CD8-positive, alpha-beta memory T cell (primary cell): ENCODE measurements at regions of chr5 and their contacts with region 1.

Region 1: GRCh38 chr5:181191529-181192394 is 13.2 kb downstream of the TRIM7 start:
- DNase-seq: peak; percentile 90 to 97 (median 95)
- H3K4me3 ChIP-seq: peak overlapping the region; percentile 100
- H3K4me3 Mint-ChIP-seq: peak overlapping the region; percentile 94 to 100 (median 97)
- H3K27ac ChIP-seq: peak overlapping the region; percentile 83
- H3K27ac Mint-ChIP-seq: peak overlapping the region; percentile 93 to 100 (median 97)
- H3K4me1 ChIP-seq: peaks cover 6% of the 10 kb centered on the region
- H3K4me1 Mint-ChIP-seq: peaks cover 27 to 47% (median 35%) of the 10 kb centered on the region in 3 donors
- H3K27me3 ChIP-seq: no peaks in the 10 kb centered on the region
- H3K27me3 Mint-ChIP-seq: peaks cover 0 to 36% of the 10 kb centered on the region in 2 donors

Region 2: GRCh38 chr5:181001947-181002346 is 189.8 kb before region 1 on chr5:
- CTCF ChIA-PET with region 1: no interaction called
- POLR2A ChIA-PET with region 1: no interaction called
- DNase-seq: no peak
- H3K4me3 ChIP-seq: no peak overlapping the region
- H3K4me3 Mint-ChIP-seq: no peak overlapping the region
- H3K27ac ChIP-seq: no peak overlapping the region
- H3K27ac Mint-ChIP-seq: no peak overlapping the region
- H3K4me1 ChIP-seq: no peaks in the 10 kb centered on the region
- H3K4me1 Mint-ChIP-seq: no peaks in the 10 kb centered on the region
- H3K27me3 ChIP-seq: peaks cover under 1% of the 10 kb centered on the region
- H3K27me3 Mint-ChIP-seq: peaks cover 14 to 42% of the 10 kb centered on the region in 2 donors

Region 3: DNA sequence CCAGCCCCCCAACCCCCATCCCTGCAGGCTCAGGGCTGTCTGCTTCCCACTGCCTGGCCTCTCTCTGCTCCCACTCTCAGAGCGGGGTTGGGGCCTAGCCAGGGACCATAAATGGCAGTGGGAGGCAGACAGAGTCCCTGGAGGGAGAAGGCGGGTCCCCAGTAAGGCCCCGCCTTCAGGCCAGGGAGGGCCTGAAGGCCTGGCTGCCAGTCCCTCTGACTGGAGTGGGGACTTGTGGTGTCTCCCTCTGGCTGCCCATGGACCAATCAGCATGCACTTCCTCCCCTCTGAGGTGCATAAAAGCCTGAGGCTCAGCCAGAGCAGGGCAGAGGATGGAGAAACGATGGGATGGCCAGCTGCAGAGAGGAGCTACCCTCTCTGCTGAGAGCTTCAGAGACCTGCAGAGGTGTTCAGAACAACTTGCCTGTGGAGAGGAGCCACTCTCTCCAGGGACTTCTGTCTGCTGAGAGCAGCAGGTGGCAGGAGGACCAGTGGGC is 154.3 kb before region 1 on chr5:
- CTCF ChIA-PET with region 1: no interaction called
- POLR2A ChIA-PET with region 1: no interaction called
- DNase-seq: no peak
- H3K4me3 ChIP-seq: no peak overlapping the region
- H3K4me3 Mint-ChIP-seq: no peak overlapping the region
- H3K27ac ChIP-seq: no peak overlapping the region
- H3K27ac Mint-ChIP-seq: no peak overlapping the region
- H3K4me1 ChIP-seq: no peaks in the 10 kb centered on the region
- H3K4me1 Mint-ChIP-seq: no peaks in the 10 kb centered on the region
- H3K27me3 ChIP-seq: no peaks in the 10 kb centered on the region
- H3K27me3 Mint-ChIP-seq: peaks cover 11 to 39% of the 10 kb centered on the region in 2 donors

Region 4: GRCh38 chr5:181217111-181217802 is 25.5 kb after region 1 on chr5:
- CTCF ChIA-PET with region 1: interaction called, 164 read pairs
- POLR2A ChIA-PET with region 1: interaction called, 101 read pairs
- DNase-seq: peak; percentile 61 to 76 (median 70)
- H3K4me3 ChIP-seq: peak overlapping the region; percentile 82
- H3K4me3 Mint-ChIP-seq: peak overlapping the region; percentile 87 to 96 (median 93)
- H3K27ac ChIP-seq: peak overlapping the region; percentile 26
- H3K27ac Mint-ChIP-seq: peak overlapping the region; percentile 92 to 100 (median 98)
- H3K4me1 ChIP-seq: peaks cover 38% of the 10 kb centered on the region
- H3K4me1 Mint-ChIP-seq: peaks cover 43 to 54% (median 45%) of the 10 kb centered on the region in 3 donors
- H3K27me3 ChIP-seq: no peaks in the 10 kb centered on the region
- H3K27me3 Mint-ChIP-seq: peaks cover 4 to 22% of the 10 kb centered on the region in 2 donors

Region 5: GRCh38 chr5:181243512-181244343 is 52.0 kb after region 1 on chr5 and contains the start of gene RACK1:
- CTCF ChIA-PET with region 1: interaction called, 7 read pairs
- POLR2A ChIA-PET with region 1: interaction called, 30 read pairs
- DNase-seq: peak; percentile 83 to 93 (median 87)
- H3K4me3 ChIP-seq: peak within 1 kb of the TSS; percentile 95
- H3K4me3 Mint-ChIP-seq: peak within 1 kb of the TSS; percentile 94 to 99 (median 97)
- H3K27ac ChIP-seq: peak within 1 kb of the TSS; percentile 96
- H3K27ac Mint-ChIP-seq: peak within 1 kb of the TSS; percentile 96 to 99 (median 98)
- H3K4me1 ChIP-seq: peaks cover 64% of the 10 kb centered on the region
- H3K4me1 Mint-ChIP-seq: peaks cover 68 to 76% (median 70%) of the 10 kb centered on the region in 3 donors
- H3K27me3 ChIP-seq: no peaks in the 10 kb centered on the region
- H3K27me3 Mint-ChIP-seq: peaks cover 0 to 2% of the 10 kb centered on the region in 2 donors
- total RNA-seq, gene RACK1: 2,341 to 2,398 TPM